H1 (cell line): ENCODE measurements at regions of chr20 and their contacts with region 1.

Region 1: DNA sequence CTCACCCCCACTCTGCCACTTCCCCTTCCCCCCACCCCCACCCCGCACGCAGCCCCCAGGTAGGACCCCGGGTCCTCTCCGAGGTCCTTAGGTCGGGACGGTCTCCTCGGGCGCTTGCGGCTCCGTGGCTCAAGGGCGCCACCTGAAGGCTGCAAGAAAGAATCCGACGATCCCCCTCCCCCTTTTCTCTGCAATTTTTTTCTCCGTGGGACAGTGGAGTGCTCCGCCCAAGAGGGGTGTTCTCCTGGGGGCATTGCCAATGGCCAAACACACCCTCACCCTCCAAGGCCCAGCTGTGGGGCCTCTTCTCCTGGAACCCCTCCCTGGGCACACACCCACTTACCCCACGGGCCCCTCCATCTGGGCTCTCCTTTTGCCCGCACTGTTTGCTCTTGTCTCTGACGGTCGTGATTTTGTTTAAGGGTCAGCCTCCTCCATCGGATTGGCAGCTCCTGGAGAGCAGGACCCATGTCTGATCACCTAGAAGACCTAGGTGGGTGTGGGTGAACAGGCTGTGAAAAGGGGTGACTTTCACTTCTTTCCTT is 1.1 kb upstream of the TMEM74B start:
- DNase-seq: peak; percentile 21 to 84
- H3K4me3 ChIP-seq: peak overlapping the region in 2 of 4 experiments; percentile 41 to 72; a peak in 4 of 8 replicates
- H3K27ac ChIP-seq: no peak overlapping the region
- H3K4me1 ChIP-seq: peaks cover 0 to 14% (median 8%) of the 10 kb centered on the region in 4 experiments; a peak in 5 of 7 replicates
- H3K27me3 ChIP-seq: peaks cover 8 to 38% (median 26%) of the 10 kb centered on the region in 4 experiments
- CTCF ChIP-seq: peak; percentile 57 to 74 (median 68)
- EP300 ChIP-seq: no peak
- POLR2A ChIP-seq: no peak
- RAD21 ChIP-seq: peak; percentile 63 to 65

Region 2: GRCh38 chr20:1171461-1172093 is 14.3 kb before region 1 on chr20:
- CTCF ChIA-PET with region 1: interaction called, 27 read pairs
- POLR2A ChIA-PET with region 1: interaction called, 8 read pairs
- DNase-seq: peak in 1 of 2 experiments; percentile 84
- H3K4me3 ChIP-seq: no peak overlapping the region
- H3K27ac ChIP-seq: no peak overlapping the region
- H3K4me1 ChIP-seq: no peaks in the 10 kb centered on the region
- H3K27me3 ChIP-seq: no peaks in the 10 kb centered on the region
- CTCF ChIP-seq: no peak
- EP300 ChIP-seq: no peak
- POLR2A ChIP-seq: no peak
- RAD21 ChIP-seq: no peak

Region 3: GRCh38 chr20:1199212-1199873 is 13.5 kb after region 1 on chr20:
- CTCF ChIA-PET with region 1: interaction called, 101 read pairs
- POLR2A ChIA-PET with region 1: interaction called, 4 read pairs
- DNase-seq: no peak
- H3K4me3 ChIP-seq: no peak overlapping the region
- H3K27ac ChIP-seq: no peak overlapping the region
- H3K4me1 ChIP-seq: no peaks in the 10 kb centered on the region
- H3K27me3 ChIP-seq: no peaks in the 10 kb centered on the region; a peak in 1 of 7 replicates
- CTCF ChIP-seq: no peak
- EP300 ChIP-seq: no peak
- POLR2A ChIP-seq: no peak
- RAD21 ChIP-seq: no peak